ENCODE measurements at regions of chr4 and their contacts with region 1.

Region 1: GRCh38 chr4:156968479-156968984 is 3.1 kb downstream of the PDGFC start:
- DNase-seq: peak; percentile 45

Region 2: DNA sequence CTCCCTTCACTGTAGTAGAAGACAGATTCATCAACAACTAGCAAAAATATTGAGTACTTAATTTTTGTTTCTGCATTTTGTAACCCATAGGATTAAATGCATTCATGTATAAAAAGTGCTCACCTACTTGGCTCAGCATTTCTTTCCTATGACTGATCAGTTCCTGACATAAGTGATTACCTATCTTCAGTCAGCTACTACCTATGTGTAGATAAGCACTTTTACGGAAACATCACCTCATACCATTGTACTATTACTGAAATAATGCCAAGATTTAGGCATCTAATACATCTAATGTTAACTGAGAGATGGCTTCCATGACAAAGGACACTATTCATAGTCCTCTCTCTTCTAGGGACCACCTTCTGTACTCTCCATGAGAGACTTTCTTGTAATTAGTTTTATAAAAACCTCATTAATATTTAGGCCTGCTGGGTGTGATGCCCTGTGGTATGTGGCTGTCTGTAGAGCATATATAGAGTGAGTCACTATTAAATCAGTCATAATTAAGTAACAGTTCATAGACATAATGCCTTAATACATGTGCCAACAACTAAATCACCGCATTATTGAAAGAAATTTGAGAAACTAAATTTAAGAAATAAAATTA is 144.0 kb before region 1 on chr4:
- CTCF ChIA-PET with region 1: no interaction called
- POLR2A ChIA-PET with region 1: no interaction called
- DNase-seq: no peak

Region 3: DNA sequence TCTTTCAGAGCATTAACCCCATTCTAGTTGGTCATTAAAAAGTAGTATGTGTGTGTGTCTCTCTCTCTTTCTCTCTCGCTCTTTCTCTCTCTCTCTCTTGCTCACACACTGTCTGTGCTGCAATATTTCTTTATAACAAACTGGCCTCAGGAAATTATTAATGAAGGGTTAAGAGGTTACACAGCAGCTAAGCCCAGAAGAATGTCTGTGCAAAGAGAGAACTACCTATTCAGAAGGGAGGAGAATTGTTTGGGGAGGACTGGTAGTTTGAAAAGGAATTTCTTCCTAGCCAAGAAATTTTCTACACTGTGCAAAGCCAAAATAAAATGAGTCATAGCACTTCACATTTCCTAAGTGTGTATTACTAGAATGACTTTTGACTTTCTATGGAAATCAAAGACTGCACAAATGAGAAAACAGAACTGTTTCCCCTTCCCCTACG is 19.1 kb before region 1 on chr4:
- CTCF ChIA-PET with region 1: interaction called, 14 read pairs
- POLR2A ChIA-PET with region 1: no interaction called
- DNase-seq: no peak

Region 4: DNA sequence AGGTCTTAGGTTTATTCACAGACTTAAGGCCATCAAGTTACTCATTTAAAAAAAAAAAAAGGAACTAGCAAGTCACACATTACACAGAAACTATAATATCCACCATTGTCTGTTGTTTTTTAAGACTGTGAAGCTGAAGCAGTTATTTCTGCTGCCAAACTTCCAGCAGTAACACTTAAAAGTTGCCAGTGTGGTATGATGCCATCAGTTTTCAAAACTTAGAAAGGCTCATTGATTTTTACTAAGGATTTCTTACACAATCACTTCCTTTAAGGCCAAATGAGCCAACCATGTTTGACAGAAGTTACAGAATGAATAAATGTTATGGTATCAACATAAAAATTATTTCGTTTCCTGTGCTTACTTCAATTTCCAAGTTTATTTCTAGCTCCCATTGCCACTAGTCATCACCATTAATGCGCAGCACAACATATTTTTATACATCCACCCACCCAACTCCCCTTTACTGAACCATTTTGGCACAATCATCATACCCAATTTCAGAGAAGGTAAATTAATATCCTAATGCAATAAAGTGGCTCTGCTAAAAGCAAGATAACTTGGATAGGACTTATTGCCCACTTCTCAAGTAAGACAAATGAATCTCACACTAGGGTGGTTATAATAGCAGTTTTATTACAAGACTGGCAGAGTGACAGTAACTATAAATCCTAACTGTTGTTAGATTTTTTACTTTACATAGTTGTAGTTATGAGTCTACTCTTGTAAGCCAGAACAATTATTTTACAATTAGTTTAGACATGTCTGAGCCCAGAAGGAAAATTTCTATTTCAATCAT is 10.1 kb before region 1 on chr4:
- CTCF ChIA-PET with region 1: interaction called, 13 read pairs
- POLR2A ChIA-PET with region 1: no interaction called
- DNase-seq: no peak

Region 5: DNA sequence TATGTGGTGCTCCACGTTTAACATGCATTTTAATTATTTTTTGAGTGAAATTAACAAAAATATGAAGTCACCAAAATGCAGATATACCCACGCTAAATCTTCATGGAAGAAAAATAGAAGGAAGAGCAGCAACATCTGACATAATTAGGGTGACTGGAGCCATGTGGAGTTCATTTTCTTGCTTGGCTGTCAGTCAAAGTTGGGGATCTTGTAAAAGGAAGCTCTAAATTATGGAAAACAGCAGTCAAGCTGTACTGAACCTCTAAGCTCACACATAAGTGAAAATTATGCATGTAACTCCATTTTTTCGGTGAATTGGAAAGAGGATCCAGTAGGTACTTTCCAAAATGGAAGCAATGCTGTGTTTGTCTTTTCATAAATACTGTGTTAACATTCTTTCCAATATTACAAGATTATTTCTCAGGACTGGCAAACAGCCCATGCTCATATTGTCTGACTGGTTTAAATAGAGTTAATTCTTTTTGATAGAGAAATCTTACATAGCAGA is 12.8 kb after region 1 on chr4:
- CTCF ChIA-PET with region 1: interaction called, 12 read pairs
- POLR2A ChIA-PET with region 1: interaction called, 3 read pairs
- DNase-seq: no peak